Activated CD4-positive, alpha-beta memory T cell treated with anti-CD3 and anti-CD28 coated beads for 36 hours (primary cell): ENCODE measurements at regions of chr5 and their contacts with region 1.

Region 1: GRCh38 chr5:151771259-151772028 is at the start of gene G3BP1:
- DNase-seq: peak; percentile 100
- H3K4me3 Mint-ChIP-seq: peak within 1 kb of the TSS; percentile 85
- H3K27ac Mint-ChIP-seq: peak within 1 kb of the TSS; percentile 75
- H3K4me1 Mint-ChIP-seq: peaks cover 33% of the 10 kb centered on the region
- H3K27me3 Mint-ChIP-seq: no peaks in the 10 kb centered on the region
- total RNA-seq, gene G3BP1: 237 TPM

Region 2: DNA sequence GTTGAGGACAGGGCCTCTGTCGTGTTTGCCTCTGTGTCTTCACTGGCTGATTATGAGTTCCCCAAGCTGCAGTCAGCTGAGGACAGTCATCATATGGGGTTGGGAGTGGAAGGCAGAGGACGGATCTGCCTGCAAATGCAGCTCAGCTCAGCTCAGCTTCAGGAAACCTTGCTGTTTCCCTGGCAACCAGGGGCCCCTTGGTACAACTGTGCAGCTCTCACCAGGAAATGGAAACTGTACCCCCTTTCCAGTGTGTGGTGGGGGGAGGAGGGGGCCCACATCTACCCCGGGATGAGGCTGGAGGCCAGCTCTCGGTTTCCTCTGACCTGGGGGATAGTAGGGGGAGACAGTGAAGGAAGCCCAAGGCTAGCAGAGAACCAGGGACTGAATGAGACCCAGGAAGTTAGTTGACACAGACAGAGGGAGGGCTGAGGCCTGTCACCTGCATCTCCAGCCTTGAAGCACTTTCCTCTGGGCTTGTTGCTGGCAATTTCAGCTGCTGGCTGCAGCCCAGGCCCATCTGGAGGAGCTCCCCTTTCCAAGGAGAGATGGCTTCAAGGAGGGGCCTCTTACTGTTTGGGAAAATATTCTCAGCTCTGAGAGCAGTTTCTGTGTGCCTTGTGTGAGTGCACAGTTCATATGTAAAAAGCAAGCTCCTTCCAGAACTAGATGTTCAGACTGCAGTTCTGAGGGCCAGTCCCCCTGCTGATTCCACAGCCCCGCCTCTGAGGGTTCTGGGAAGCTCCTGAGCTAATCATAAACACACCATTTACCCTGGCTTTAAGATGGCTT is 620.8 kb before region 1 on chr5:
- CTCF ChIA-PET with region 1: no interaction called
- POLR2A ChIA-PET with region 1: no interaction called
- intact Hi-C with region 1: loop called (anchors 5 kb)
- DNase-seq: peak; percentile 87
- H3K4me3 Mint-ChIP-seq: peak overlapping the region; percentile 36
- H3K27ac Mint-ChIP-seq: peak overlapping the region; percentile 90
- H3K4me1 Mint-ChIP-seq: peaks cover 94% of the 10 kb centered on the region
- H3K27me3 Mint-ChIP-seq: no peaks in the 10 kb centered on the region

Region 3: DNA sequence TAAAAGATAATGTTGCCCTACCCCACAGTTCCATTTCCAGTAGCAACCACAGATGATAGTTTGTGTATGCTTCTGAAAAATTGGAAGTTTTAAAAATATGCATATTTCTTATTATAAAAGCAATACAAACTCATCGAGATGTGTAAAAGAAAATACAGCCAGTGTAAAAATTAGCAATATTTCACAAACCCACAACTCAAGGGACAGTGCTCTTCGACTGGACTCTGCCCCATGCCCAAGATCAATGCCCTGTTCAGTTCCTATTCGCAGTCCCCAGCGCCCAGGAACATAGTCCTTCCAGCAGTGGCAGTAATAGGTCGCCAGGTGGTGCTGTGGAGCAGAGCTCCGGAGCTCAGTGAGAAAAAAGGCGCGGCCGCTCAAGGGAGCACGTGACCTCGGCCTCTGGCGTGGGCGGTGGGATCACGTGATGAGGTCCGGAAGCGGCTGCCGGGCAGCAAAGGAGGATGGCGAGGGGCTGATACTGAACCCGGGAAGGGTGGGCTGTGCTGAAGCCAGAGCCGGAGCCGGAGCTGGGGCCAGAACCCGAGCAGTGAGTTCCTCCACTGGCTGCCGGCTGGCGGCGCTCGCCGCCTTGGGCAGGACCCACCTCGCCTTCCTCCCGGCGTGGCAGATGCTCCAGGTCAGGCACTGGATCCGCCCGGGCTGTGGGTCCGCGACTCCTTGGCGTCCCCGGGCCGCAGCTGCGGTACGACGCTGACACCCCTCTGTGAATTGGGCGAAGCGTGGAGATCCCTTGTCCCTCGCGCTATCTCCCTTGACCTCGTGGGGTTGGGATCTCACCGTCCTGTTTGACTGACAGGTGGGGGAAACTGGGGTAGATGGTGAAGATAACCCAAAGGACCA is 324.0 kb before region 1 on chr5 and contains the start of gene SLC36A1:
- CTCF ChIA-PET with region 1: interaction called, 7 read pairs
- POLR2A ChIA-PET with region 1: no interaction called
- intact Hi-C with region 1: loop called (anchors 1 kb)
- DNase-seq: peak; percentile 97
- H3K4me3 Mint-ChIP-seq: peak within 1 kb of the TSS; percentile 89
- H3K27ac Mint-ChIP-seq: peak within 1 kb of the TSS; percentile 69
- H3K4me1 Mint-ChIP-seq: peaks cover 22% of the 10 kb centered on the region
- H3K27me3 Mint-ChIP-seq: peaks cover 7% of the 10 kb centered on the region
- total RNA-seq, gene SLC36A1: 3.8 to 3.9 TPM

Region 4: DNA sequence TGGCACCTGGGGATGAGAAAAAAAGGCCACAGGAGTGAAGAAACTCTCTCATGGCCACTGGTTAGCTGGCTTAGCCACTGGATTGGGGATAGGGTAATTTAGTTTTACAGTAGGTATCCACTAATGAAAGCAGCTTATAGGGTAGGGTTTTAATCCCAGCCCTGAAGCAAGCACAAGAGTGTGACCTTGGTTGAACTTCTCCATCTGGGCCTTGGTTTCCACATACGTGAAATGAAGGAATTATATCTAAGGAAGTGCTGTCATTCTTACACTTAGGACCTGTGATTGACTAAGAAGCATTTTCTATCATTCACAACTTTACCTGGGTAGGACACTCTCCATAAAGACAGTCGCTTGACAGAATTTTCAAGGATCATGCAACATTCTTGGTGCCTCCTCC is 229.9 kb before region 1 on chr5:
- CTCF ChIA-PET with region 1: no interaction called
- POLR2A ChIA-PET with region 1: no interaction called
- intact Hi-C with region 1: no loop called
- DNase-seq: no peak
- H3K4me3 Mint-ChIP-seq: no peak overlapping the region
- H3K27ac Mint-ChIP-seq: no peak overlapping the region
- H3K4me1 Mint-ChIP-seq: no peaks in the 10 kb centered on the region
- H3K27me3 Mint-ChIP-seq: peaks cover 2% of the 10 kb centered on the region

Region 5: DNA sequence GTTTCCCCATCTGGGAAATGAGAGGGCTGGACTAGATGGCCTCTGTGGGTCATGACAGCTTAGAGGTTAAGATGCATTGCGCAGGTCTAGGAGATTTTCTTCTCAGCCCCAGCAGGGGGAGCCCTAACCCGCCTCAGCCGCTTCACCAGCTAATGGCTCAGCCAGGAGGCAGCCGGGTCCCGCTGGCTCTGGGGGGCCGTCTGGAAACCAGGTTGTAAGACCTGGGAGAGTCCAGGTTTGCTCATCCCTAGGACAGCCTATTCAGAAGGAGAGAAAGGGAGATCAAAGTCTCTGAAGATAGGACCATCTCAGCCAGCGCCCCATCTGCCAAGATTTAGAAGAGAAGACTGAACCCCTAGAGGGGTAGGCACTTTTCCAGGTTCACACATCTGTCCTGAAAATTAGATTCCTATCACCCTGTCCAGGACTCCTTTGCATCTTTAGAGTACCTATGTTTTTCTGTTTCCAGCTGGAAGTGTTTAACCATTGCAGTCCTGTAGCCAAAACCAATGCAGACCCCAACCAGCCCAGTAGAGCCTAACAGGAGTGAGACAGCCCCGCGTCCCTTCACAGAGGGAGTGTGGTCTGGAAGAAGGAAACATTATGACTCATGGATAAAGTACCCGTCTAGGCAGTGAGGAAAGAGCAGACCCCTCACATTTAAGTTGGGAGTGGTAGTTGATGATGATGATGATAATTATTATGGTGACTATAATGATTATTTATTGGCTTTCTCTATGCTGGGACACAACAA is 112.3 kb before region 1 on chr5:
- CTCF ChIA-PET with region 1: interaction called, 39 read pairs
- POLR2A ChIA-PET with region 1: interaction called, 6 read pairs
- intact Hi-C with region 1: loop called (anchors 1 kb)
- DNase-seq: peak; percentile 88
- H3K4me3 Mint-ChIP-seq: no peak overlapping the region
- H3K27ac Mint-ChIP-seq: no peak overlapping the region
- H3K4me1 Mint-ChIP-seq: peaks cover 15% of the 10 kb centered on the region
- H3K27me3 Mint-ChIP-seq: peaks cover 3% of the 10 kb centered on the region

Region 6: GRCh38 chr5:151751091-151751490 is 20.4 kb before region 1 on chr5:
- CTCF ChIA-PET with region 1: interaction called, 11 read pairs
- POLR2A ChIA-PET with region 1: interaction called, 71 read pairs
- intact Hi-C with region 1: loop called (anchors 1 kb)
- DNase-seq: no peak
- H3K4me3 Mint-ChIP-seq: no peak overlapping the region
- H3K27ac Mint-ChIP-seq: no peak overlapping the region
- H3K4me1 Mint-ChIP-seq: peaks cover 38% of the 10 kb centered on the region
- H3K27me3 Mint-ChIP-seq: no peaks in the 10 kb centered on the region